Calu3 (cell line): ENCODE measurements at regions of chr12 and their contacts with region 1.

Region 1: DNA sequence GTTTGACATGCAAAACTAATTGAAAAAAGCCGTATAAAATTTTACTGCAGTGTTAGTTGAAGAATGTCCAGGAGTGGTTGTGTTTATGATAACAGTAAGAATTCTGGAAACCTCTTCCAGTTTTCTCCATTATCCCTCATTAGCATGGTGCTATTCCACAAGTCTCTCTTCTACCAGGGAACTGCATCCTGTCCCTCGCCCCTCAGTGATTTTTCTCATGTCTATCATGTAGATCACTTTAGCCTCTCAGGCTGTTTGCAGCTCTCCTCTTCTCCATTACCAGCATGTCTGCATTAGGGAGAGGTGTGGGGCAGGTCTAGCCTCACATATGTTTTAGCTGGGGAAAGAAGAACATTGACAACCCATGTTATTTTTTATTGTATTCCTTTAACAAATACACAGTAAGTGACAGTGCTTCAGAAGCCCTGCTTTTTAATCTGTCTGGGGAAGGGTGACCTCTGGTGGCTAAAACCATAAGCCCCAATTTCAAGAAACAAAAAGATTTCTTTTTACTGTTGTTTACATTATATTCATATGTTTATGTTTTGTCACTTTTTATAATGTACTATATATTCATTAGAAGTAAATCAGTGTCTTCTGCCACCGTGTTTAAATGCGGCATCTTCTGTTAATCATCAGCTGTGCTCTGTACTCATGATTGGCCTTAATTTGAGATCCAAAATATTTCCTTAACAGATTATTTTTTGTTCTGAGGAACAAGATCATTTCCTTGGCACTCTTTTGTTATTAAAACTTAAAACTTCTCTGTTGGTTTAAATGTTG is 70.7 kb downstream of the RASSF8 start:
- DNase-seq: peak; percentile 52
- H3K4me3 Mint-ChIP-seq: no peak overlapping the region
- H3K27ac Mint-ChIP-seq: no peak overlapping the region
- H3K4me1 Mint-ChIP-seq: peaks cover 33% of the 10 kb centered on the region
- H3K27me3 Mint-ChIP-seq: no peaks in the 10 kb centered on the region
- CTCF ChIP-seq: peak; percentile 51

Region 2: GRCh38 chr12:25583545-25583944 is 445.6 kb before region 1 on chr12:
- CTCF ChIA-PET with region 1: no interaction called
- intact Hi-C with region 1: loop called (anchors 5 kb)
- DNase-seq: peak; percentile 9
- H3K4me3 Mint-ChIP-seq: no peak overlapping the region
- H3K27ac Mint-ChIP-seq: no peak overlapping the region
- H3K4me1 Mint-ChIP-seq: no peaks in the 10 kb centered on the region
- H3K27me3 Mint-ChIP-seq: peaks cover 9% of the 10 kb centered on the region
- CTCF ChIP-seq: no peak

Region 3: GRCh38 chr12:25960143-25960542 is 69.0 kb before region 1 on chr12:
- CTCF ChIA-PET with region 1: interaction called, 3 read pairs
- intact Hi-C with region 1: loop called (anchors 2 kb)
- DNase-seq: peak; percentile 15
- H3K4me3 Mint-ChIP-seq: peak overlapping the region; percentile 82
- H3K27ac Mint-ChIP-seq: peak overlapping the region; percentile 56
- H3K4me1 Mint-ChIP-seq: peaks cover 25% of the 10 kb centered on the region
- H3K27me3 Mint-ChIP-seq: no peaks in the 10 kb centered on the region
- CTCF ChIP-seq: no peak

Region 4: DNA sequence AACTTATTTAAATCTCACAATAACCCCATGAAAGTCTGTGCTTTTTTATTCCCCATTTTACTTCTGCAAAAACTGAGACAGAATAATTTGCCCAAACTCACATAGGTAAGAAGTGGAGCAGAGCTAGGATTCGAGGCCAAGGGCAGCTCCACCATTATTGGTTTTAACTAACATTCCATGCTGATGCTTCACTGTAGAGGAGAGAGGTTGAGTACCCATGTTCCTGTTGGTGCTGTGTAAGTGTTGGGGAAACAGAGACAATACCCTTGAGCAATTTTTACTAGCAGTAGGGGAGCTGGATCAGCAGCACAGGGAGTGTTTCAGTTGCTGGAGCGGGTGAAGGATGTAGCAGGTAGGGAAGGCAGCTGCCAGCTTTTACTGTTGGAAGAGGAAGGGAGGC is 49.6 kb before region 1 on chr12:
- CTCF ChIA-PET with region 1: no interaction called
- intact Hi-C with region 1: no loop called
- DNase-seq: no peak
- H3K4me3 Mint-ChIP-seq: no peak overlapping the region
- H3K27ac Mint-ChIP-seq: no peak overlapping the region
- H3K4me1 Mint-ChIP-seq: no peaks in the 10 kb centered on the region
- H3K27me3 Mint-ChIP-seq: no peaks in the 10 kb centered on the region
- CTCF ChIP-seq: no peak